CD8-positive, alpha-beta memory T cell (primary cell): ENCODE measurements at regions of chr7 and their contacts with region 1.

Region 1: GRCh38 chr7:33932832-33933468 is 27.6 kb downstream of the BMPER start:
- DNase-seq: peak; percentile 29 to 65 (median 35)
- H3K4me3 ChIP-seq: no peak overlapping the region
- H3K4me3 Mint-ChIP-seq: no peak overlapping the region
- H3K27ac ChIP-seq: no peak overlapping the region
- H3K27ac Mint-ChIP-seq: no peak overlapping the region
- H3K4me1 ChIP-seq: no peaks in the 10 kb centered on the region
- H3K4me1 Mint-ChIP-seq: peaks cover 0 to 5% (median 4%) of the 10 kb centered on the region in 3 donors
- H3K27me3 ChIP-seq: no peaks in the 10 kb centered on the region
- H3K27me3 Mint-ChIP-seq: peaks cover 9 to 26% of the 10 kb centered on the region in 2 donors

Region 2: DNA sequence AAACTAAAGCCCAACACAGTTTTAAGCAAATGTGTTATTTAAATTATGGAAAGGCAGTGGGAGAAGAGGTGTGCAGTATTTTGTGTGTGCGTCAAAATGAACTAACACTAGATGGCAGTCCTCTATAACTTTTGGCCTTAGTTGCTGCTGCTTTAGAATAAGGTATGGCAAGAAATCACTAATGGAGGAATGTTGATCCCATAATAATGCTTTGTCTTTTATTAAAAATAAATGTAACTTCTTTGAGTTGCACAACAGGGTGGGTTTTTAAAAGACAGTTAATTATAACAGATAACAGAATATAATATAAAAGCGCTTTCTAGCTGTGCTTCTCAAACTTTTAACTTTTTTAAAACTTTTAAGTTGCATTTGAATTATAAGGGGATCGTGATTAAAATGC is 747.2 kb before region 1 on chr7:
- CTCF ChIA-PET with region 1: interaction called, 16 read pairs
- POLR2A ChIA-PET with region 1: no interaction called
- DNase-seq: peak in 2 of 5 donors; percentile 9 to 14
- H3K4me3 ChIP-seq: no peak overlapping the region
- H3K4me3 Mint-ChIP-seq: no peak overlapping the region
- H3K27ac ChIP-seq: no peak overlapping the region
- H3K27ac Mint-ChIP-seq: no peak overlapping the region
- H3K4me1 ChIP-seq: peaks cover under 1% of the 10 kb centered on the region
- H3K4me1 Mint-ChIP-seq: peaks cover 5 to 9% (median 6%) of the 10 kb centered on the region in 3 donors
- H3K27me3 ChIP-seq: no peaks in the 10 kb centered on the region
- H3K27me3 Mint-ChIP-seq: no peaks in the 10 kb centered on the region